Right cardiac atrium (tissue), 5 donors: ENCODE measurements at regions of chr3 and their contacts with region 1.

Region 1: GRCh38 chr3:160413613-160414248 is 14.3 kb downstream of the SMC4 start:
- DNase-seq: peak; percentile 31 to 61 (median 36)
- ATAC-seq: peak; percentile 33 to 61
- H3K4me3 ChIP-seq: no peak overlapping the region
- H3K27ac ChIP-seq: no peak overlapping the region
- H3K4me1 ChIP-seq: no peaks in the 10 kb centered on the region
- H3K27me3 ChIP-seq: no peaks in the 10 kb centered on the region

Region 2: DNA sequence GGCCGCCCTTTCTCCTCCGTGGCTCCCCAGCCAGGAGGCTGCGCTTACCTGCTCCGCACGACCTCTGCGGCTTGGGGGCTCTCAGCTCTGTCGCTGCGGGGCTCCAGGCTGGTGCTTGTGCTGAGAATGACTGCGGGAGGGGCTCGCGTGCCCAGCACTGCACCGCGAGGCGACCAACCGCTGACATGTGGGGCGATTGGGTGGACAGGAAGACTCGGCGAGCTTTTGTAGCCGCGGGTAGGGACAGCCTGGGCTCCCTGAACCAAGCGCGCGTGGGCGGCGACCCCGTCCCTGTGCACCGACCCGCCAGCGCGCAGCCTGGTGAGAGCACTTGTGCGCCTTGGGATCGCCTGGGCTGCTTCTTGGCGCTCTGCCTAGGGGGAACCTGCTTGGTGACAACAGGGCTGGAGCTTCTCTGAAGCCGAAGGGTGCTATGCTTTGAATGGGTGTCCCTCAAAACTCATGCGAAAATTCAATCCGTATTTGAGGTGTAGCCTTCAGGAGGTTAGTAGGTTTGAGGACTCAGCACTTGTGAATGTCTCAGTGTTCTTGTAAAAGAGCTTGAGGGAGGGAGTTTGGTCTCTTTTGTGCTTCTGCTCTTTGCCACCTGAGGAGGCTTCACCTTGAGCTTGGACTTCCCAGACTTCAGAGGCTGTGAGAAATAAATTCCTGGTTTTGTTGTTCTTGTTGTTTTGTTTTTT is 374.7 kb before region 1 on chr3:
- intact Hi-C with region 1: loop called in 3 of 4 experiments (anchors 10 kb)
- DNase-seq: peak; percentile 25 to 63 (median 57)
- ATAC-seq: peak; percentile 29 to 51
- H3K4me3 ChIP-seq: no peak overlapping the region
- H3K27ac ChIP-seq: no peak overlapping the region
- H3K4me1 ChIP-seq: no peaks in the 10 kb centered on the region
- H3K27me3 ChIP-seq: no peaks in the 10 kb centered on the region

Region 3: GRCh38 chr3:160150525-160150924 is 263.2 kb before region 1 on chr3:
- intact Hi-C with region 1: loop called in 2 of 4 experiments (anchors 5 to 10 kb)
- DNase-seq: no peak
- ATAC-seq: peak; percentile 59 to 89
- H3K4me3 ChIP-seq: no peak overlapping the region
- H3K27ac ChIP-seq: peak overlapping the region; percentile 33
- H3K4me1 ChIP-seq: no peaks in the 10 kb centered on the region
- H3K27me3 ChIP-seq: no peaks in the 10 kb centered on the region

Region 4: GRCh38 chr3:160163229-160163878 is 250.4 kb before region 1 on chr3:
- intact Hi-C with region 1: loop called in 3 of 4 experiments (anchors 5 to 10 kb)
- DNase-seq: no peak
- ATAC-seq: no peak
- H3K4me3 ChIP-seq: no peak overlapping the region
- H3K27ac ChIP-seq: no peak overlapping the region
- H3K4me1 ChIP-seq: no peaks in the 10 kb centered on the region
- H3K27me3 ChIP-seq: no peaks in the 10 kb centered on the region